Activated CD8-positive, alpha-beta T cell treated with anti-CD3 and anti-CD28 coated beads, Interleukin-2, amount 10 ng/mL, durations not matched to agents 7 days and 5 days (primary cell): ENCODE measurements at regions of chr10 and their contacts with region 1.

Region 1: GRCh38 chr10:122298598-122299301 is 27.7 kb downstream of the BTBD16 start:
- DNase-seq: peak; percentile 74
- ATAC-seq: peak; percentile 84
- H3K4me3 Mint-ChIP-seq: peak overlapping the region; percentile 15
- H3K27ac Mint-ChIP-seq: no peak overlapping the region
- H3K4me1 Mint-ChIP-seq: peaks cover 24% of the 10 kb centered on the region
- H3K27me3 Mint-ChIP-seq: peaks cover 22% of the 10 kb centered on the region

Region 2: DNA sequence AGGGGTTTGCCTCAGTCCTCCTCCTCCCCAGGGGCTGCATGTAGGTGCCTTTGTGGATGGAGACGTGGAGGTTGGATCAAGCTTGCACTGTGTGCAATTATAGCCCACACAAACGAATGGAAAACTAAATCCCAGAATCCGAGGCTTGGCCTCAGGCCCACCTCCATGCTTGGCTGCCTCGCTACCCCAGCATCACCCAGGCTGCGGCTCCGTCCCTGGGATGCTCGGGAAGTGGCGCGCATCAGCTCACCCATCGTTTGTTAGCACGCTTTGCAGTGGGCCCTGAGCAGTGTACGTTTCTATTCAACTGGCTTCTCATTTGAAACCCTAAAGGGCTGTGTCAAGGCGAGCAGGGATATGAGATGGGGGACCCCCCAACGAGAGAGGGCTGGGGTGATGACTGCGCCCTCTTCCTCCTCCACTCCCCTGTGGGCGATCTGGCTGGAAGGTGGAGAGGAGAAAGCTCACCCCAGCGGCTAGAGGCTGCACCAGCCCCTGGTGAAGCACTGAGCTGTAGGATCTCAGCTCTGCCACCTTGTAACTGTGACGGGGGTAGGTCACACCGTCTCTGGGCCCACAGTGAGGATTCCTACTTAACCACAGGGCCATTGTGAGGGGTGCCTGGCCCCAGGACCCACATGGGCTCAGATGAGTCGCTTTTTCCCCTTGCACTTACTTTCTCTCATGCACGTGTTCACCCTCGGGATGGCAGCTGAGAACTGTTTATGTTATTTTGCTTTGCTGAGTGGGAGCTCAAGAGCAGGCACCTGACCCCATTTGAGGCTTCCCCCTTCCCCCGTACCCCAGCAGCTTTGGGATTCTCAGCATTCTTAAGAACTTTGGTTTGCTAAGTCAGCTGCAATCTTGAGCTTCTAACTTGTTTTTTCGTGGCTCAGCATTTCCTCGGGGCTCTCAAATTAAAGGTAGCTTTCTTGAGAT is 40.3 kb before region 1 on chr10:
- CTCF ChIA-PET with region 1: no interaction called
- POLR2A ChIA-PET with region 1: no interaction called
- DNase-seq: no peak
- ATAC-seq: no peak
- H3K4me3 Mint-ChIP-seq: no peak overlapping the region
- H3K27ac Mint-ChIP-seq: no peak overlapping the region
- H3K4me1 Mint-ChIP-seq: no peaks in the 10 kb centered on the region
- H3K27me3 Mint-ChIP-seq: peaks cover 8% of the 10 kb centered on the region

Region 3: DNA sequence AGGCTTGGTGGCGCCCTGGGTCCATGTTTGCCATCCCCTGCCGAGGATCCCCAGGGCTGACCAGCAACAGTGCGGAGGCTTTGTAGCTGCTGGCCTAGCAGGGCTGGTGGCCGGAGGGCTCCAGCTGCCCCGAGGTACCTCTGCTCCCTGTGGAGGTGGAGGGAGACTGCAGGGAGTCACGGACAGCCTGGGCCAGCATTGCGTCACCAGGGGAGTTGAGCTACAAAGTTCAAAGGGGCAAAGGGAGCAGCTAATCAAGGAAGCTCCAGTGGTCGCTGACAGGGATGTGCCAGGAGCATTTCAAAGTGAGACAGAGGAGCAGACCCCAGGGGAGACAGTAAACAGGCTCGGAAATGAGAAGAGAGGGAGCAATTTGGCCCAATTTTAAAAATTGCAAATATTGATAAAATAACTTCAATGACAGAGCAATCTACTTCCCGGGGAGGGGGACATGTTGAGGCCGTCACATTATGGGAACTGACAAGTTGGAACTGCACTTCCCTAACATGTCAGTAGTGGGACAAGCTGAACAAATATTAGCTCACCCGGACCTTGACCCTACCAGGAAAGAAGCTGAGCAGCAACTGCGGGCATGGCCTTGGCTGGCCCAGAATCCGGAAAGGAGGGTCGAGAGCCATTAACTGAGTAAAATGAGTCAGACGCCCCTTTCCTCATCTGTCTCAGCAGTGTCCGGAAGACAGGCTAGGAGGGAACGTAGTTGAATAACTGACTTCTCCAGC is 11.7 kb after region 1 on chr10:
- CTCF ChIA-PET with region 1: interaction called, 11 read pairs
- POLR2A ChIA-PET with region 1: no interaction called
- DNase-seq: no peak
- ATAC-seq: no peak
- H3K4me3 Mint-ChIP-seq: no peak overlapping the region
- H3K27ac Mint-ChIP-seq: no peak overlapping the region
- H3K4me1 Mint-ChIP-seq: no peaks in the 10 kb centered on the region
- H3K27me3 Mint-ChIP-seq: peaks cover 19% of the 10 kb centered on the region

Region 4: DNA sequence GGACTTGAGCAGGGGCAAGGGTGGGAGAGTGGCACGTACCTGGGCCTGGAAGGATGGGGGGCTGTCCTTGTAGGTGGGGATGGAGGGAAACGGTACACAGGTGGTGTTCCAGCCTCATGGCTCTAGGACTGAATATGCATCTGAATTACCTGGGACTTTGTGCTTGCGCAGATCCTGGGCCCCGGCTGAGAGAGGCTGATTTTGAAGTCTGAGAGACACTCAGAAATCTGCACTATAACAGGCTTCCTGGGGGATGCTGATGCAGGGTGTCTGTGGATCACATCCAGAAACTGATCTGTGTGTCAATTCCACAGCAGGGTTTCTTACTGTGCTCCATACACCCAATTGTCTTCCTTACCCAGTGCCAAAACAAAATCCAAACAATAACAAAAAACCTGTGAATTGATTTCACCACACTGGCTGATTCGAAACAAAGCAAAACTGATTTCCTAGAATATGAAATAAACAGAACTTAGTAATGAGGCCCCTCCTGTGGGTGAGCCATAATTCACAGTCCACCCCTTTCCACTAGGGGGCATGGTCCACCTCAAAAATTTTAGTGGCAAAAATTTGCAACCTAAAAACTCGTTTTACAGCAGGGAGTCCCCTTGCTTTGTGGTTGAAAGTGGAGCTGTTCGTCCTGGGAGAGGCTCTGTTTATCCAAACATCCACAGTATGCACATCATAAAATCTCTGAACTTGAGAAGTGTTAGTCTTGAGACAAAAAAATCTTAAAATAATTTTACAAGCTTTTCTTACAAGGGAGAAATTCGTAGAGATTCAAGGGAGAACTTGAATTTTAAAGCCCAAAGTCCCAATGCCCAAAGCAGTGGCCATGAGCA is 43.8 kb after region 1 on chr10:
- CTCF ChIA-PET with region 1: interaction called, 18 read pairs
- POLR2A ChIA-PET with region 1: no interaction called
- DNase-seq: peak; percentile 69
- ATAC-seq: peak; percentile 64
- H3K4me3 Mint-ChIP-seq: no peak overlapping the region
- H3K27ac Mint-ChIP-seq: no peak overlapping the region
- H3K4me1 Mint-ChIP-seq: peaks cover 7% of the 10 kb centered on the region
- H3K27me3 Mint-ChIP-seq: no peaks in the 10 kb centered on the region